AG04449 (cell line): ENCODE measurements at regions of chr19 and their contacts with region 1.

Region 1: DNA sequence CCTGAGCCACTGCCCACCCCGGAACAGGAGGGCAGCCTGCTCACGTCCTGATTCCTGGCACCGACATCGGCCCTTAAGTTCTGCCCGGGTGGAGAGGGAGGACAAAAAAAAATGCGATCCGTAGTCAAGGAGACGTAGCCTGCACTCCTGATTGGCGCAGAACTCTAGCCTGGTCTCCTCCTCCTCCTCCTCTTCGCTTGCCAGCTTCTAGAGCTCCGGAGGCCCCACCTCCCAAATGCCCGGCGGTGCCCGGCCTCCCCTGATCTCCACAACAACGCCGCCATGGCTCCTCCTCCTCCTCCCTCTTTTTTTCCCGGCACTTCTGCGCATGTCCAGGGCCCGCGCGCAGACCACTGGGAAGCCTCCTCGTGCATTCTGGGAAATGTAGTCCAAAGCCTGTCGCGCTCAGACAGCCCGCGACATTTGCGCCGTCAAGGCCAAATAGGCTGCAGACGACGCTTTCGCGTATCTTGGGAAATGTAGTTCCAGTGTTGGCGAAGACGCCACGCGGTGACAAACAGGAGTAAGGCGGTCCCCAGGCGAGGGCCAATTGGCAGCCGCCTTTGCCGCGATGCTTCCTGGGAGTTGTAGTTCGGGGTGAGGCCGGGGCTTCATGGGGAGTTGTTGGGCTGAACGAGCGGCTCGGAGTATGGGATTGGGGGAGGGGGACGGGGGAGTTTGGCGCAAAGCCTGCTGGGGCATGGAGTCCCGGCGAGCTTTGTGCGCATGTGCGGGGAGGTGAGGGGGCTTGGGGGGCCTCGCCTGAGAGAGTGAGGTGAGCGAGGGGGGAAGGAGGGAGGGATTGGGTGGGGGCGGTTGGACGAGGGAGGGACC is at the start of gene ZNF444:
- DNase-seq: peak; percentile 97
- H3K4me3 ChIP-seq: peak within 1 kb of the TSS; percentile 66
- CTCF ChIP-seq: no peak

Region 2: GRCh38 chr19:56121180-56122167 is 19.3 kb before region 1 on chr19 and contains the start of gene ZNF787:
- CTCF ChIA-PET with region 1: no interaction called
- POLR2A ChIA-PET with region 1: interaction called, 11 read pairs
- DNase-seq: peak; percentile 80
- H3K4me3 ChIP-seq: peak within 1 kb of the TSS; percentile 75
- CTCF ChIP-seq: no peak